ENCODE measurements at regions of chr19 and their contacts with region 1.

Region 1: GRCh38 chr19:5001615-5002014 is 32.7 kb downstream of the KDM4B start:
- DNase-seq: peak; percentile 32
- ATAC-seq: peak; percentile 89
- H3K4me3 ChIP-seq: peak overlapping the region in 1 of 2 experiments; percentile 1; a peak in 1 of 4 replicates
- H3K27ac ChIP-seq: peak overlapping the region; percentile 64; the same call in 1 of the 2 replicates
- H3K4me1 ChIP-seq: peaks cover 12 to 20% of the 10 kb centered on the region in 2 experiments
- H3K27me3 ChIP-seq: no peaks in the 10 kb centered on the region
- CTCF ChIP-seq: peak; percentile 37 to 95 (median 90); a peak in 5 of 6 replicates
- POLR2A ChIP-seq: no peak
- RAD21 ChIP-seq: peak; percentile 54

Region 2: GRCh38 chr19:4968462-4969291 is 32.9 kb before region 1 on chr19 and contains the start of gene KDM4B:
- CTCF ChIA-PET with region 1: interaction called, 10 read pairs
- POLR2A ChIA-PET with region 1: interaction called, 3 read pairs
- RAD21 ChIA-PET with region 1: no interaction called
- intact Hi-C with region 1: no loop called
- DNase-seq: peak; percentile 98
- ATAC-seq: peak; percentile 92
- H3K4me3 ChIP-seq: peak within 1 kb of the TSS; percentile 67 to 76
- H3K27ac ChIP-seq: peak within 1 kb of the TSS; percentile 76
- H3K4me1 ChIP-seq: peaks cover 44 to 64% of the 10 kb centered on the region in 2 experiments
- H3K27me3 ChIP-seq: no peaks in the 10 kb centered on the region
- CTCF ChIP-seq: no peak
- POLR2A ChIP-seq: peak; percentile 78
- RAD21 ChIP-seq: no peak
- total RNA-seq, gene KDM4B: 35.9 TPM

Region 3: GRCh38 chr19:5011476-5012238 is 10.0 kb after region 1 on chr19:
- CTCF ChIA-PET with region 1: interaction called, 17 read pairs
- POLR2A ChIA-PET with region 1: no interaction called
- RAD21 ChIA-PET with region 1: no interaction called
- intact Hi-C with region 1: no loop called
- DNase-seq: no peak
- ATAC-seq: no peak
- H3K4me3 ChIP-seq: no peak overlapping the region
- H3K27ac ChIP-seq: no peak overlapping the region
- H3K4me1 ChIP-seq: peaks cover 0 to 3% of the 10 kb centered on the region in 2 experiments; a peak in 2 of 4 replicates
- H3K27me3 ChIP-seq: no peaks in the 10 kb centered on the region
- CTCF ChIP-seq: no peak
- POLR2A ChIP-seq: no peak
- RAD21 ChIP-seq: no peak

Region 4: GRCh38 chr19:5023128-5023571 is 21.5 kb after region 1 on chr19:
- CTCF ChIA-PET with region 1: interaction called, 14 read pairs
- POLR2A ChIA-PET with region 1: no interaction called
- RAD21 ChIA-PET with region 1: interaction called in 1 of 2 experiments, 4 read pairs
- intact Hi-C with region 1: no loop called
- DNase-seq: no peak
- ATAC-seq: no peak
- H3K4me3 ChIP-seq: no peak overlapping the region
- H3K27ac ChIP-seq: no peak overlapping the region
- H3K4me1 ChIP-seq: peaks cover 3 to 10% of the 10 kb centered on the region in 2 experiments; a peak in 2 of 4 replicates
- H3K27me3 ChIP-seq: no peaks in the 10 kb centered on the region
- CTCF ChIP-seq: no peak
- POLR2A ChIP-seq: no peak
- RAD21 ChIP-seq: no peak